ENCODE measurements at regions of chr12 and their contacts with region 1.

Region 1: GRCh38 chr12:55681142-55682077 is 26.3 kb downstream of the ITGA7 start:
- DNase-seq: peak; percentile 81 to 92
- ATAC-seq: peak; percentile 79 to 88 (median 86)
- H3K4me3 ChIP-seq: peak overlapping the region; percentile 58
- H3K27ac ChIP-seq: peak overlapping the region; percentile 67
- H3K4me1 ChIP-seq: peaks cover 13% of the 10 kb centered on the region
- H3K27me3 ChIP-seq: no peaks in the 10 kb centered on the region
- CTCF ChIP-seq: peak; percentile 38

Region 2: GRCh38 chr12:55700255-55701018 is 19.0 kb after region 1 on chr12:
- intact Hi-C with region 1: loop called in 1 of 2 experiments (anchors 2 kb)
- DNase-seq: peak; percentile 75 to 92
- ATAC-seq: peak; percentile 18 to 56 (median 40)
- H3K4me3 ChIP-seq: peak overlapping the region; percentile 15
- H3K27ac ChIP-seq: peak overlapping the region; percentile 92
- H3K4me1 ChIP-seq: peaks cover 38% of the 10 kb centered on the region
- H3K27me3 ChIP-seq: no peaks in the 10 kb centered on the region
- CTCF ChIP-seq: no peak

Region 3: DNA sequence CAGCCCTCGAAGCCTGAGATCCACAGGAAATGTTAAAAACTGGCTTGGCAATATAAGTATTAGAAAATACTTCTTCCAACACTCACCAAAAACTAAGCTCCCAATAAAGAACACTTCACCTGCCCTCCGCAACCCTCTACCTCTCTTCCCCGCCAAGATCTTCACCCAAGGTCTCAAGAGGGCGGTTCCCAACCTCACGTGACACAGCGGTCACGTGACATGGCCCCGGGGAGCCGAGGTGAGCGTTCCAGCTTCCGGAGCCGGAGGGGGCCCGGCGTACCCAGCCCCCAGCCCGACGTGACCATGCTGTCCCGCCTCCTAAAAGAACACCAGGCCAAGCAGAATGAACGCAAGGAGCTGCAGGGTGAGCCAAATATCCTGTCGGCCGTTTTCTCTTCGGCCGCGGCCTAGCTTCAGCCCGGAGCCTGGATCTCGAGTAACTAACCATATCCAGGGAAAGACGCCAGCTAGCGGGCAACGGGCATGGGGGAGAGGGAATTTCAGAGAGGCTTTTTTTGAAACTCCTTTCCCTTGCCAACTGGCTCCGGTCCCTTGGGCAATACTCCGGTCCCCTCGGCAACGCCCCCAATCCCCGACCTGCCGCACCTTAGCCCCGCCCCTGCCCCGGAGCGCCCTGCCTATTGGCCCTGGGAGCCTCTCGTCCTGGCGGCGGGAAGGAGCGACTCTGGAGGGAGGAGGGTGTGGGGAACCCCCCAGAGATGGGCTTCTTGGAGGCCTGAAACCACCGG is 34.6 kb after region 1 on chr12 and contains the start of gene BLOC1S1:
- intact Hi-C with region 1: loop called (anchors 1 to 5 kb)
- DNase-seq: peak; percentile 94 to 97
- ATAC-seq: peak; percentile 50 to 67 (median 60)
- H3K4me3 ChIP-seq: peak within 1 kb of the TSS; percentile 69
- H3K27ac ChIP-seq: peak within 1 kb of the TSS; percentile 92
- H3K4me1 ChIP-seq: peaks cover 83% of the 10 kb centered on the region
- H3K27me3 ChIP-seq: no peaks in the 10 kb centered on the region
- CTCF ChIP-seq: peak; percentile 6
- total RNA-seq, gene BLOC1S1: 127 to 193 (median 165) TPM